ENCODE measurements at regions of chr4 and their contacts with region 1.

Region 1: GRCh38 chr4:124641715-124642381 is 70.7 kb downstream of the ANKRD50 start:
- DNase-seq: peak; percentile 94
- H3K4me3 Mint-ChIP-seq: peak overlapping the region; percentile 52
- H3K27ac Mint-ChIP-seq: peak overlapping the region; percentile 71
- H3K4me1 Mint-ChIP-seq: peaks cover 28% of the 10 kb centered on the region
- H3K27me3 Mint-ChIP-seq: no peaks in the 10 kb centered on the region
- CTCF ChIP-seq: no peak

Region 2: GRCh38 chr4:124658795-124659194 is 16.9 kb after region 1 on chr4:
- CTCF ChIA-PET with region 1: no interaction called
- POLR2A ChIA-PET with region 1: no interaction called
- intact Hi-C with region 1: no loop called
- DNase-seq: no peak
- H3K4me3 Mint-ChIP-seq: no peak overlapping the region
- H3K27ac Mint-ChIP-seq: no peak overlapping the region
- H3K4me1 Mint-ChIP-seq: no peaks in the 10 kb centered on the region
- H3K27me3 Mint-ChIP-seq: no peaks in the 10 kb centered on the region
- CTCF ChIP-seq: no peak

Region 3: DNA sequence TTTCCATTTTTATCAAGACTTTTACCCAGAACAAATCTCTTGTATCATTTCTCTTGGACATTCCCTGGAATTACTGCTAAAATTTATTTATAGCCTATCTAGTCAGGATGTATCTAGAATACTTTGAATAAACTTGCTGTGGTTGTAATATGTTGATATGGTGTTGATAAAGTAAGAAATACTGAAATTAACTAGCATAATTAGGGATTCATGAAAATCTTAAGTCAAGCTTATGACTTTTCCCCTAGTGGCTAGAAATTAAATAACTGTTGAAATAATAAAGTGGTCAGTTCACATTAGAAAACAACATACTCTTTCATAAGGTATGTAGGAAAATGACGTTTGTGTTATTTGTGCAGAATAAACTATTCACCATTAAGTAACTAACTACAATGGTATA is 143.8 kb after region 1 on chr4:
- CTCF ChIA-PET with region 1: no interaction called
- POLR2A ChIA-PET with region 1: no interaction called
- intact Hi-C with region 1: no loop called
- DNase-seq: no peak
- H3K4me3 Mint-ChIP-seq: no peak overlapping the region
- H3K27ac Mint-ChIP-seq: no peak overlapping the region
- H3K4me1 Mint-ChIP-seq: no peaks in the 10 kb centered on the region
- H3K27me3 Mint-ChIP-seq: no peaks in the 10 kb centered on the region
- CTCF ChIP-seq: no peak

Region 4: GRCh38 chr4:125104616-125105015 is 462.8 kb after region 1 on chr4:
- CTCF ChIA-PET with region 1: no interaction called
- POLR2A ChIA-PET with region 1: no interaction called
- intact Hi-C with region 1: loop called (anchors 5 kb)
- DNase-seq: peak; percentile 36
- H3K4me3 Mint-ChIP-seq: no peak overlapping the region
- H3K27ac Mint-ChIP-seq: no peak overlapping the region
- H3K4me1 Mint-ChIP-seq: peaks cover 32% of the 10 kb centered on the region
- H3K27me3 Mint-ChIP-seq: no peaks in the 10 kb centered on the region
- CTCF ChIP-seq: no peak